Naive thymus-derived CD4-positive, alpha-beta T cell (primary cell): ENCODE measurements at regions of chr1 and their contacts with region 1.

Region 1: DNA sequence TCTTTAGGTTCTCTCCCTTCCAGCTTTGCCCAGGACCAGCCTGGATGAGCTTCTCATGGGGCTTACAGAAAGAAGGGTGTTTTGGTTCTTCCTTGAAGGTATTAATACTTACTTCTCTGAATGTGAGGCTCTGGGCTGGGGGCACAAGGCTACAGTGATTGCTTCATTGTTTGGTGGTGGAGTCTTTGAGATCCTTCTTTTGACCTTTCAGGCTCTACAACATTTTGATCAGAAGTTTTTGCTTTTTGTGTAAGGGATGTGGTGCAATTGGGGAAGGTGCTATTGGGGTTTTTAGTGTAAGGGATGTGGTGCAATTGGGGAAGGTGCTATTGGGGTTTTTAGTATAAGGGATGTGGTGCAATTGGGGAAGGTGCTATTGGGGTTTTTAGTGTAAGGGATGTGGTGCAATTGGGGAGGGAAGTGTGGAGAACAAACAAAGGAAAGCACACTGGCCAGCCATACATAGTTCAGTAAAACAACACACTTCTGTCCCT is 103.6 kb upstream of the IVNS1ABP start:
- DNase-seq: no peak
- ATAC-seq: peak; percentile 90
- H3K4me3 ChIP-seq: no peak overlapping the region
- H3K4me3 Mint-ChIP-seq: peak overlapping the region in 1 of 10 donors; percentile 71
- H3K27ac ChIP-seq: no peak overlapping the region
- H3K27ac Mint-ChIP-seq: peak overlapping the region in 3 of 9 donors; percentile 9 to 95 (median 42)
- H3K4me1 ChIP-seq: peaks cover 0 to 21% of the 10 kb centered on the region in 2 donors
- H3K4me1 Mint-ChIP-seq: peaks cover 0 to 69% (median 3%) of the 10 kb centered on the region in 7 donors
- H3K27me3 ChIP-seq: no peaks in the 10 kb centered on the region
- H3K27me3 Mint-ChIP-seq: no peaks in the 10 kb centered on the region

Region 2: DNA sequence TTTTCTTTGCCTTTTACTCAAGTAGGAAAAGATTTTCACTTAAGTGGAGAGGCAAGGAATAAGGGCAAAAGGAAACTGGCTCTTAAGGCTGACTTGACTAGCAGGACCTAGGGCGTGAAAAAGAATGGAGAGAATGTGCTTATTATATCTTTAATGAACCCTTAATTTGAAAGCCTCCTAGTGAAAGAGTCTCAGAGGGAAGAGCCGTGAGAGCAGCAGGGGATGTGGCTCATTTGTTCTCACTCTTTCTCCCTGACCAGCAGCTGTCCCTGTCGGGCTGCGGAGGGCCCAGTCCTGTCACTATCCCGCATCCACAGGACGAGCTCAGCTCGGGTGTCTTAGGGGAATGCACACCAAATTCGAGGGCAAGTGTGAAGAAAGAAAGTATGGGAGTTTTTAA is 846.0 kb before region 1 on chr1:
- CTCF ChIA-PET with region 1: no interaction called
- POLR2A ChIA-PET with region 1: no interaction called
- intact Hi-C with region 1: no loop called
- DNase-seq: no peak
- ATAC-seq: no peak
- H3K4me3 ChIP-seq: no peak overlapping the region
- H3K4me3 Mint-ChIP-seq: no peak overlapping the region
- H3K27ac ChIP-seq: no peak overlapping the region
- H3K27ac Mint-ChIP-seq: no peak overlapping the region
- H3K4me1 ChIP-seq: no peaks in the 10 kb centered on the region
- H3K4me1 Mint-ChIP-seq: no peaks in the 10 kb centered on the region
- H3K27me3 ChIP-seq: no peaks in the 10 kb centered on the region
- H3K27me3 Mint-ChIP-seq: peaks cover 0 to 2% (median 0%) of the 10 kb centered on the region in 5 donors

Region 3: DNA sequence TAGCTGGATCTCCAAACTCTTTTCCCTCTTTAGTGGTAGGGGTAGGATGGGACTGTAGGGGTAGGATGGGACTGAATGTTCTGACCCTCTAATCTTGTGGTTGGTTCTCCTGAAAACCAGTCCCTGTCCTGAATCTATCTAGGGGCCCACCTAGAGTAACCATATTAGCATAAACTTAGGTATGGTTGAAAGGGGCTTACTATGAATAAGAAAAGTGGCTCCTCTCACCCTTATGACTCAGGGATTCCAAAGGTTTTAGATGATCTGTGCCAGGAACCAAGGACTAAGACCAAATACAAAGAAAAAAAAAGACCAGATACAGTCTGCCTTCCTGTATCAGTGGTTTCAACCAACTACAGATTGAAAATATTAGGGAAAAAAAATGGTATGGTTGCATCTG is 346.3 kb before region 1 on chr1:
- CTCF ChIA-PET with region 1: no interaction called
- POLR2A ChIA-PET with region 1: no interaction called
- intact Hi-C with region 1: no loop called
- DNase-seq: no peak
- ATAC-seq: no peak
- H3K4me3 ChIP-seq: no peak overlapping the region
- H3K4me3 Mint-ChIP-seq: no peak overlapping the region
- H3K27ac ChIP-seq: no peak overlapping the region
- H3K27ac Mint-ChIP-seq: no peak overlapping the region
- H3K4me1 ChIP-seq: no peaks in the 10 kb centered on the region
- H3K4me1 Mint-ChIP-seq: peaks cover 0 to 72% (median 47%) of the 10 kb centered on the region in 7 donors
- H3K27me3 ChIP-seq: no peaks in the 10 kb centered on the region
- H3K27me3 Mint-ChIP-seq: no peaks in the 10 kb centered on the region

Region 4: GRCh38 chr1:185213091-185213490 is 207.5 kb before region 1 on chr1:
- CTCF ChIA-PET with region 1: no interaction called
- POLR2A ChIA-PET with region 1: no interaction called
- intact Hi-C with region 1: no loop called
- DNase-seq: no peak
- ATAC-seq: no peak
- H3K4me3 ChIP-seq: no peak overlapping the region
- H3K4me3 Mint-ChIP-seq: no peak overlapping the region
- H3K27ac ChIP-seq: no peak overlapping the region
- H3K27ac Mint-ChIP-seq: no peak overlapping the region
- H3K4me1 ChIP-seq: no peaks in the 10 kb centered on the region
- H3K4me1 Mint-ChIP-seq: no peaks in the 10 kb centered on the region
- H3K27me3 ChIP-seq: no peaks in the 10 kb centered on the region
- H3K27me3 Mint-ChIP-seq: no peaks in the 10 kb centered on the region

Region 5: DNA sequence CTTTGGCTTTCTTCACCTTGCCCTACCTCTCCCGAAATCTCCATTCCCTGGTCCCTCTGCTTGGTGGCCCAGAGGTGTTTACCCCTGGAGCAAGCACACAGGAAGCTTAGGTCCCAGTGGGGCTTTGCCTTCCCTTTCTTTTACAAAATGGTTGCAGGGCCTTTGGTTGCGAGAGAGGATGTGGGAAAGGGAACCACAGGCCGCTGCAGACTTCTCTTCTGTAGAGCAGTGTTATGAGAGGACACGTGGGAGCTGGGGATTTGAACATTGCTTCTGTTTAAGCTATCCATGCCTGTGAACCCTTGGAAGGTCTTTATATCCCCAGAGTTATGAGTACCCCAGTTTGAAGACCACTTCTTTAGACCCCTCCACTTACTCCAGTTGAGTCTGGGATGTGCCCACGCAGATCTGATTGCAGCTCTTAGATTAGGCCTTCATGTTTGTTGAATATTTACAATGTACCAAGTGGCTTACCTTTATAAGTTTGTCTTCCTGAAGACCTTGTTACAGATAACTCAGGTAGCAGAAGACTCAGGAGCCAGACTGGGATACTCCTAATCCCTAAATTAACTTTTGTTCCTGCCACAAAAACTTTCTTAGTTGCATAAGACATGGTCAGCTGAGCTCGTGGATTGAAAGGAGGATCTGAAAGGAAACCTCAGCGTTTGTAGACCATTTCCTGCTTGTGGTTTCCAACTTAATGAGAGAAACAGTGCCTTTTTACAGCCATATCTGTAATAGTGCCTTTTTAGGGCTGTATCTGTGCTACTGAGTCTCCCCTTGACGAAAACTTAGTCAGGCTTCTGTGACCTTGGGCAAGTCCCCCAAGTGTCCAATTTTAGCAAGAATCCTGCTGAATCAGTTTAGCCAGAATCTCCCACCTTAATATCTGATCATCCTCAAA is 81.7 kb before region 1 on chr1:
- CTCF ChIA-PET with region 1: no interaction called
- POLR2A ChIA-PET with region 1: interaction called, 3 read pairs
- intact Hi-C with region 1: loop called in 1 of 2 experiments (anchors 1 kb)
- DNase-seq: peak in 8 of 9 donors; percentile 26 to 61 (median 53)
- ATAC-seq: peak; percentile 89
- H3K4me3 ChIP-seq: peak overlapping the region; percentile 2
- H3K4me3 Mint-ChIP-seq: peak overlapping the region; percentile 37 to 79 (median 61)
- H3K27ac ChIP-seq: peak overlapping the region; percentile 0
- H3K27ac Mint-ChIP-seq: peak overlapping the region; percentile 68 to 92 (median 80)
- H3K4me1 ChIP-seq: peaks cover 25 to 27% of the 10 kb centered on the region in 2 donors
- H3K4me1 Mint-ChIP-seq: peaks cover 20 to 47% (median 43%) of the 10 kb centered on the region in 7 donors
- H3K27me3 ChIP-seq: no peaks in the 10 kb centered on the region
- H3K27me3 Mint-ChIP-seq: peaks cover 0 to 3% (median 0%) of the 10 kb centered on the region in 5 donors

Region 6: GRCh38 chr1:185375583-185375982 is 45.1 kb before region 1 on chr1:
- CTCF ChIA-PET with region 1: no interaction called
- POLR2A ChIA-PET with region 1: no interaction called
- intact Hi-C with region 1: loop called in 1 of 2 experiments (anchors 5 kb)
- DNase-seq: no peak
- ATAC-seq: peak; percentile 57
- H3K4me3 ChIP-seq: no peak overlapping the region
- H3K4me3 Mint-ChIP-seq: no peak overlapping the region
- H3K27ac ChIP-seq: no peak overlapping the region
- H3K27ac Mint-ChIP-seq: no peak overlapping the region
- H3K4me1 ChIP-seq: no peaks in the 10 kb centered on the region
- H3K4me1 Mint-ChIP-seq: peaks cover 6 to 24% (median 14%) of the 10 kb centered on the region in 7 donors
- H3K27me3 ChIP-seq: no peaks in the 10 kb centered on the region
- H3K27me3 Mint-ChIP-seq: no peaks in the 10 kb centered on the region

Region 7: DNA sequence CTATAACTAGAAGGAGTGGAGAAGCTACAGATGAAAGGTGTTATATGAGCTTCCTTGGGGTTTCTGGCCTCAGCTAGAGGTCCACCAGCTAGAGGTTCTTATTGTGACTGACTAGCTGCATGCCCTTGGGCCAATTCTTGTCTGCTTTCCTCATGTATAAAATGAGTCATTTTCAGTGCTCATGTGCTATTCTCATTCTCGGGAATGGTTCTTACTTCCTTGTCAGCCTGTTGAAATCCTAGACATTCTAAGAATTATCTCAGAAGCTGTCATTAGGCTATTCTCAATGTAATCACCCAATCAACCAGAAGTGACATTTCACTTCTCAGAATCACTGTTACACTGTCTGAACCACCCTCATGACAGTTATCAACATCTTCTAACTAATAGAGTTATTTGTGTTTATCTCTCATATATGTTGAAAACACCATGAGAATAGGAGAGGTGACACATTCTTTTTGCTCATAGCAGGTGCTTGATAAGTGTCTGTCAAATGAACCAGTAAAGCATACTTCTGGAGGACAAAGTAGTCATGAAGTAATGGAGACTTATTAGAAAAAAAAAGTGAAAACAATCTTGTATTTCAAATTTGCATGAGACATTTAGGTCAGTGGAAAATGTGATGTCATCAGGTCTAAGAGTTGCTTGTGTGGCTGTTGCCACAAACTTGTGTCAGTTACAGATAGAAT is 19.2 kb after region 1 on chr1:
- CTCF ChIA-PET with region 1: no interaction called
- POLR2A ChIA-PET with region 1: no interaction called
- intact Hi-C with region 1: loop called in 1 of 2 experiments (anchors 1 kb)
- DNase-seq: peak in 1 of 9 donors; percentile 34
- ATAC-seq: peak; percentile 80
- H3K4me3 ChIP-seq: no peak overlapping the region
- H3K4me3 Mint-ChIP-seq: no peak overlapping the region
- H3K27ac ChIP-seq: no peak overlapping the region
- H3K27ac Mint-ChIP-seq: no peak overlapping the region
- H3K4me1 ChIP-seq: peaks cover 0 to 20% of the 10 kb centered on the region in 2 donors
- H3K4me1 Mint-ChIP-seq: peaks cover 0 to 36% (median 3%) of the 10 kb centered on the region in 7 donors
- H3K27me3 ChIP-seq: no peaks in the 10 kb centered on the region
- H3K27me3 Mint-ChIP-seq: no peaks in the 10 kb centered on the region